Heart right ventricle (tissue), 16 donors: ENCODE measurements at regions of chr3 and their contacts with region 1.

Region 1: DNA sequence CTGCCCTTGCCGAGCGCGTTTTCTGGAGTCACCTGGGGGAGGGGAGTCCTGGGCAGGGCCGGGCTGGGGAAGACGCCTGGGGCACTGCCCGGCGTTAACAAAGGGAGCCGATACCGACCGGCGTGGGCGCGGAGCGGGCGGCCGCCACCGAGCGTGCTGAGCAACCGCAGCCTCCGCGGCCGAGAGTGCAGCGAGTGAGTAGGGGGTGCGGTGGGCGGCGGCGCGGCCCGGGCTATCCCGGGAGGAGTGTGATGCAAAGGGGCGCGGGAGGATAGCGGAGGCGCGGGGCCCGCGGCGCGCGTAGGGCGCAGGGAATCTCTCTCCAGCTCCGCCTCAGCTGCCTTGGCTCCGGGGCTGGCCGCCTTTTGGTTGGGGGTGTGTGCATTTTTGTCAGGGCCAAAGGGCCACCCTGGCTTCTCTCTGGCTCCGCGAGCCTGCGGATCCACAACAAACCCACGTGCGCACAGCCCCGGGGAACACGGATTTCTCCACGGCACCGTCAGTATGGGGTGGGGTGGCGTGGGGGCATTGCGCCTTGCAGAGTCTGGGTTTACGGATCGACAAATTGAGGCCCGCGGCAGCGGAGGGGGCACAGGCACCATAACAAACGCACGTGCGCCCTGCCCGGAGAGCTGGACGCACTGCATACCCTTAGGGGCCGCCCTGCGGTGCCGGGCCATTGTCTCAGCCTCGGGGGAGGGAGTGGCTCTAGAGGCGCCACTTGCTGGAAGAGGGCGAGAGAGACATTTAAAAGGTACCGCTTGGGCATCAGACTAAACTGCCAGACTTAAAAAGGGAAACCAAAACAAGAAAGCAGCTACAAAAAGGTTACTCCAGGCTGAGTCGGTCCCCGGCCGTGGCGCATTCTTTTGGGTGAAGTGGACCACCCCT is 560 bp downstream of the ST6GAL1 start:
- DNase-seq: peak; percentile 78 to 79
- ATAC-seq: peak; percentile 75 to 92 (median 84)
- H3K4me3 ChIP-seq: peak overlapping the region; percentile 70 to 97 (median 92)
- H3K27ac ChIP-seq: peak overlapping the region; percentile 91 to 97 (median 96)
- H3K4me1 ChIP-seq: peaks cover 11 to 56% (median 44%) of the 10 kb centered on the region in 9 donors
- H3K27me3 ChIP-seq: no peaks in the 10 kb centered on the region
- CTCF ChIP-seq: peak in 7 of 9 donors; percentile 10 to 48 (median 19)

Region 2: GRCh38 chr3:185937689-185938463 is 993.0 kb before region 1 on chr3 and contains the start of gene TRA2B:
- intact Hi-C with region 1: loop called in 1 of 10 experiments (anchors 10 kb)
- DNase-seq: peak; percentile 99
- ATAC-seq: peak; percentile 98 to 99 (median 99)
- H3K4me3 ChIP-seq: peak within 1 kb of the TSS; percentile 80 to 100 (median 94)
- H3K27ac ChIP-seq: peak within 1 kb of the TSS; percentile 98 to 100 (median 100)
- H3K4me1 ChIP-seq: peaks cover 0 to 39% (median 30%) of the 10 kb centered on the region in 9 donors
- H3K27me3 ChIP-seq: no peaks in the 10 kb centered on the region
- CTCF ChIP-seq: peak in 8 of 9 donors; percentile 12 to 66 (median 40)
- total RNA-seq, gene TRA2B: 46.3 to 75.9 (median 52.1) TPM

Region 3: DNA sequence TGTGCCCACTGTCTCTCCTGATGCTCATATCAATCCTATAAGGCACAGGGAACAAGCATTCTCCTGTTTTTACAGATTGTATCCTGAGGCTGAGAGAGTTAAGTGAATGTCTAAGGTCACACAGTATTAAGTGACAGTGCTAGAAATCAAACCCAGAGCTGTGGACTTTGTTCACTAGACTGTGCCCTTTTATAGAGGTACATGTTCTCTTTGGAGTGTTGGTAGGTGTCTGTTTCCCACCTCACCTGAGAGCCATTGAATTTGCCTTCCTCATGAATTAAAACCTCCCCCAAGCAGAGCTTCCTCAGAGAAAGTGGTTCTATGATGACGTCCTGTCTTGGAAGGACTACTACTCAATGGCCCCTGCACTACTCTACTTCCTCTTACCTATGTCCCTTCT is 75.9 kb before region 1 on chr3:
- intact Hi-C with region 1: loop called in 6 of 10 experiments (anchors 5 to 10 kb)
- DNase-seq: no peak
- ATAC-seq: no peak
- H3K4me3 ChIP-seq: no peak overlapping the region
- H3K27ac ChIP-seq: no peak overlapping the region
- H3K4me1 ChIP-seq: no peaks in the 10 kb centered on the region
- H3K27me3 ChIP-seq: no peaks in the 10 kb centered on the region
- CTCF ChIP-seq: no peak

Region 4: GRCh38 chr3:186888569-186888968 is 42.3 kb before region 1 on chr3:
- intact Hi-C with region 1: loop called in 1 of 10 experiments (anchors 5 kb)
- DNase-seq: peak in 1 of 2 donors; percentile 33
- ATAC-seq: peak; percentile 79 to 98 (median 92)
- H3K4me3 ChIP-seq: no peak overlapping the region
- H3K27ac ChIP-seq: peak overlapping the region in 6 of 10 donors; percentile 17 to 49 (median 42)
- H3K4me1 ChIP-seq: peaks cover 0 to 17% (median 0%) of the 10 kb centered on the region in 9 donors
- H3K27me3 ChIP-seq: no peaks in the 10 kb centered on the region
- CTCF ChIP-seq: no peak

Region 5: GRCh38 chr3:187011915-187012314 is 81.0 kb after region 1 on chr3:
- intact Hi-C with region 1: loop called in 1 of 10 experiments (anchors 5 kb)
- DNase-seq: no peak
- ATAC-seq: peak in 3 of 8 donors; percentile 18 to 34 (median 22)
- H3K4me3 ChIP-seq: no peak overlapping the region
- H3K27ac ChIP-seq: peak overlapping the region in 8 of 10 donors; percentile 16 to 82 (median 60)
- H3K4me1 ChIP-seq: peaks cover 3 to 78% (median 55%) of the 10 kb centered on the region in 9 donors
- H3K27me3 ChIP-seq: no peaks in the 10 kb centered on the region
- CTCF ChIP-seq: no peak

Region 6: GRCh38 chr3:187101184-187102072 is 170.5 kb after region 1 on chr3:
- intact Hi-C with region 1: loop called in 1 of 10 experiments (anchors 5 kb)
- DNase-seq: peak; percentile 79 to 89
- ATAC-seq: peak; percentile 70 to 90 (median 79)
- H3K4me3 ChIP-seq: peak overlapping the region in 9 of 10 donors; percentile 3 to 36 (median 31)
- H3K27ac ChIP-seq: peak overlapping the region in 9 of 10 donors; percentile 34 to 64 (median 52)
- H3K4me1 ChIP-seq: peaks cover 0 to 42% (median 25%) of the 10 kb centered on the region in 9 donors
- H3K27me3 ChIP-seq: no peaks in the 10 kb centered on the region
- CTCF ChIP-seq: no peak